ENCODE measurements at regions of chr6 and their contacts with region 1.

Region 1: GRCh38 chr6:32413427-32414047 is 6.6 kb upstream of the BTNL2 start:
- DNase-seq: peak; percentile 90
- ATAC-seq: peak; percentile 85
- H3K4me3 Mint-ChIP-seq: no peak overlapping the region
- H3K27ac Mint-ChIP-seq: no peak overlapping the region
- H3K4me1 Mint-ChIP-seq: peaks cover 7% of the 10 kb centered on the region; the same call in 1 of the 2 replicates
- H3K27me3 Mint-ChIP-seq: peaks cover 39% of the 10 kb centered on the region
- CTCF ChIP-seq: peak; percentile 92

Region 2: GRCh38 chr6:32244946-32245398 is 168.6 kb before region 1 on chr6:
- CTCF ChIA-PET with region 1: interaction called, 10 read pairs
- POLR2A ChIA-PET with region 1: no interaction called
- DNase-seq: peak; percentile 87
- ATAC-seq: peak; percentile 82
- H3K4me3 Mint-ChIP-seq: peak overlapping the region; percentile 51
- H3K27ac Mint-ChIP-seq: peak overlapping the region; percentile 82; the same call in 1 of the 2 replicates
- H3K4me1 Mint-ChIP-seq: peaks cover 6% of the 10 kb centered on the region
- H3K27me3 Mint-ChIP-seq: peaks cover 5% of the 10 kb centered on the region; the same call in 1 of the 2 replicates
- CTCF ChIP-seq: peak; percentile 88

Region 3: DNA sequence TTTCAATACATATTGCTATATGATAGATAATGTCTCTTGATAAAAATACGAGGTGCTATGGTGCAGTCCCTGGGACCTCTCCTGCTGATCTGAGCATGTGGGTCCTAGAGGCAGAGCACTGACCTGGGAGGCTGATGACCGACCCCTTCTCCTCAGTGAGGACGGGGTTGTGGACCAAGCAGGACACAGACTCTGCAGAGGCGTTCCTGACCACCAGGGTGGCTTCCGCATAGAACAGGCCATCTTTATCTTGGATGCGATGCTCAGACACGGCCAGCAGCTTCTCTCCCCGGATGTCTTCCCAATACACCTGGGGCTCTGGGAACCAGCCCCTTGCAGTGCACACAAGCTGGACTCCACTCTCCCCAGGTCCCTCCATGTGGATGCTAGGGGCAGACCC is 10.7 kb before region 1 on chr6:
- CTCF ChIA-PET with region 1: interaction called, 20 read pairs
- POLR2A ChIA-PET with region 1: no interaction called
- DNase-seq: no peak
- ATAC-seq: peak; percentile 70
- H3K4me3 Mint-ChIP-seq: no peak overlapping the region
- H3K27ac Mint-ChIP-seq: no peak overlapping the region
- H3K4me1 Mint-ChIP-seq: peaks cover 10% of the 10 kb centered on the region; the same call in 1 of the 2 replicates
- H3K27me3 Mint-ChIP-seq: peaks cover 7% of the 10 kb centered on the region; the same call in 1 of the 2 replicates
- CTCF ChIP-seq: no peak

Region 4: DNA sequence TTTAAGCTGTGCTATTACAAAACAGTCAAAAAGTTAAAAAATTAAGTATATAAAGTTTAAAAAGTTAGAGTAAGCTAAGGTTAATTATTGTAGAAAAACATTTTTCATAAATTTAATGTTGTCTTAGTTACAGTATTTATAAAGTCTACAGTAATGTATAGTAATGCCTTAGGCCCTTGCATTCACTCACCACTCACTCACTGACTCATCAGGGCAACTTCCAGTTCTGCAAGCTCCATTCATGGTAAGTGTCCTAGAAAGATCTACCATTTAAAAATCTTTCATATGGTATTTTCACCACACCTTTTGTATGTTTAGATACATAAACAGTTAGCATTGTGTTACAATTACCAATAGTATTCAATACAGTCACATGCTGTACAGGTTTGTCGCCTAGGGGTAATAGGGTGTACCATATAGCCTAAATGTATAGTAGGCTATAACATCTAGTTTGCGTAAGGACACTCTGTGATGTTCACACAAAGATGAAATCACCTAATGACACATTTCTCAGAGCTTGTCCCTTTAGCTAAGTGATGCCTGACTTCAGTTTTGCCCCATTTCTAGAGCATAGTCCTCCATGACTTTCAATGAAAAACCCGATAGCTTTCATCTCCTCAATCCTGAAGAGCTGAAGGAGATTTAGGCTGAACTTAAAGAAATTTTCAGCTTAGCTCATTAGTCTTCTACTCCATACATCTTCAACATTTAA is 11.2 kb after region 1 on chr6:
- CTCF ChIA-PET with region 1: interaction called, 11 read pairs
- POLR2A ChIA-PET with region 1: no interaction called
- DNase-seq: no peak
- ATAC-seq: no peak
- H3K4me3 Mint-ChIP-seq: no peak overlapping the region
- H3K27ac Mint-ChIP-seq: no peak overlapping the region
- H3K4me1 Mint-ChIP-seq: no peaks in the 10 kb centered on the region
- H3K27me3 Mint-ChIP-seq: no peaks in the 10 kb centered on the region
- CTCF ChIP-seq: no peak

Region 5: DNA sequence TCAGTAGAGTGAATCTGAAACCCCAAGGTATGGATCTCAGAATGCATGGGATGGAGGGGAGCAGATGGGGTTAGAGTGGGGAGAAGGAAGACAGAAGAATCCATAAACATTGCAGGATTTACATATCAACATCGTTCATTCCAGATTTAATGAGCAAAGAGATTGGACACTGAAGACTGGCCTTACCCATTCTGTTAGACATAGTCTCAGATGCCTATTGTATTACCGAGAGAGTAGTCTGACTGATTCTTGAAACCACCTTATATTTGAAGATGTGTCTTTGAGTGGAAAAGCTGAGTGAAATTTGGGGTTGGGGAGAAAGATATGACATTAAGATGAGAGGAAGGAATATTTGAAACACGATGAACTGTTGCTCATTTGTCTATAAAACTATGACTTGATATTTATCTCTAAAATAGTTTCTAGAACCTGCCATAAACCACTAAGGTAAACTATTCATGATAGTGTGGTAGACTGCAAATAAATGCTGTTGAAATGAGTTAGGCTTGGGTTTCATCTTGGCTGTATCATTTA is 31.9 kb after region 1 on chr6:
- CTCF ChIA-PET with region 1: no interaction called
- POLR2A ChIA-PET with region 1: no interaction called
- DNase-seq: no peak
- ATAC-seq: no peak
- H3K4me3 Mint-ChIP-seq: no peak overlapping the region
- H3K27ac Mint-ChIP-seq: no peak overlapping the region
- H3K4me1 Mint-ChIP-seq: no peaks in the 10 kb centered on the region
- H3K27me3 Mint-ChIP-seq: peaks cover 23% of the 10 kb centered on the region
- CTCF ChIP-seq: no peak

Region 6: GRCh38 chr6:32700391-32701040 is 287.0 kb after region 1 on chr6:
- CTCF ChIA-PET with region 1: interaction called, 17 read pairs
- POLR2A ChIA-PET with region 1: no interaction called
- DNase-seq: peak; percentile 41
- ATAC-seq: peak; percentile 86
- H3K4me3 Mint-ChIP-seq: no peak overlapping the region
- H3K27ac Mint-ChIP-seq: no peak overlapping the region
- H3K4me1 Mint-ChIP-seq: no peaks in the 10 kb centered on the region
- H3K27me3 Mint-ChIP-seq: peaks cover 5% of the 10 kb centered on the region; the same call in 1 of the 2 replicates
- CTCF ChIP-seq: peak; percentile 39

Region 7: GRCh38 chr6:32785781-32786533 is 372.4 kb after region 1 on chr6:
- CTCF ChIA-PET with region 1: interaction called, 18 read pairs
- POLR2A ChIA-PET with region 1: no interaction called
- DNase-seq: peak; percentile 42
- ATAC-seq: peak; percentile 91
- H3K4me3 Mint-ChIP-seq: no peak overlapping the region
- H3K27ac Mint-ChIP-seq: no peak overlapping the region
- H3K4me1 Mint-ChIP-seq: no peaks in the 10 kb centered on the region
- H3K27me3 Mint-ChIP-seq: peaks cover 4% of the 10 kb centered on the region; the same call in 1 of the 2 replicates
- CTCF ChIP-seq: peak; percentile 58